ENCODE measurements at regions of chr19 and their contacts with region 1.

Region 1: DNA sequence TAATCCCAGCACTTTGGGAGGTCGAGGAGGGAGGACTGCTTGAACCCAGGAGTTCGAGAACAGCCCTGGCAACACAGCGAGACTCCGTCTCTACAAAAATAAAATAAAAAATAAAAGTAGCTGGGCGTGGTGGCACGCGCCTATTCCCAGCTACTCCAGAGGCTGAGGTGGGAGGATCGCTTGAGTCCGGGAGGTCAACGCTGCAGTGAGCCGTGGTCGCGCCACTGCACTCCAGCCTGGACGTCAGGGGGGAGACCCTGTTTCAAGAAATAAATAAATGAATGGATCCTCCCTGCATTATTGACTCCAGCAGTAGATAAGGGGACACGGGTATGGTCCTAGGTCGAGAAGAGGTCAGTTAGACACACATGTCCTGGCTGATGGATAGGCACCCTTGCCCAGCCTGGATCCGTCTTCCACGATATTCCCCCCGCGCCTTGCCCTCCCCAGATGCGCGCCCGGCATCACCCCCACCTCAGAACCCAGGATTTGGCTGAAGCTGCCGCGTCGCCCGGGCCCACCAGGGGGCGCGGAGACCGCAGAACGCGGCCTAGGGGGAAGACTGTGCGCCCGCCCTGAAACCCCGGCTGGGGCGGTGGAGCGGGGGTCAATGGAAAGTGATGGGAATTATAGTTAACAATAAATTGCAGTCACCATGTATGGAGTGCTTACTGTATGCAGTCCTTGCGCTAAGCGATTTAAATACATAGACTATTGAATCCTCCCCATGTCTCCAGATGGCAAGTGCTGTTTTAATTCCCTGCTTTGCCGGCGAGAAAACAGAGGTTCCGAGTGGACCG is 2.1 kb upstream of the HOOK2 start:
- DNase-seq: peak; percentile 78
- H3K4me3 ChIP-seq: peak overlapping the region; percentile 69
- H3K27ac ChIP-seq: peak overlapping the region; percentile 56
- H3K4me1 ChIP-seq: peaks cover 44% of the 10 kb centered on the region
- CTCF ChIP-seq: peak; percentile 96

Region 2: DNA sequence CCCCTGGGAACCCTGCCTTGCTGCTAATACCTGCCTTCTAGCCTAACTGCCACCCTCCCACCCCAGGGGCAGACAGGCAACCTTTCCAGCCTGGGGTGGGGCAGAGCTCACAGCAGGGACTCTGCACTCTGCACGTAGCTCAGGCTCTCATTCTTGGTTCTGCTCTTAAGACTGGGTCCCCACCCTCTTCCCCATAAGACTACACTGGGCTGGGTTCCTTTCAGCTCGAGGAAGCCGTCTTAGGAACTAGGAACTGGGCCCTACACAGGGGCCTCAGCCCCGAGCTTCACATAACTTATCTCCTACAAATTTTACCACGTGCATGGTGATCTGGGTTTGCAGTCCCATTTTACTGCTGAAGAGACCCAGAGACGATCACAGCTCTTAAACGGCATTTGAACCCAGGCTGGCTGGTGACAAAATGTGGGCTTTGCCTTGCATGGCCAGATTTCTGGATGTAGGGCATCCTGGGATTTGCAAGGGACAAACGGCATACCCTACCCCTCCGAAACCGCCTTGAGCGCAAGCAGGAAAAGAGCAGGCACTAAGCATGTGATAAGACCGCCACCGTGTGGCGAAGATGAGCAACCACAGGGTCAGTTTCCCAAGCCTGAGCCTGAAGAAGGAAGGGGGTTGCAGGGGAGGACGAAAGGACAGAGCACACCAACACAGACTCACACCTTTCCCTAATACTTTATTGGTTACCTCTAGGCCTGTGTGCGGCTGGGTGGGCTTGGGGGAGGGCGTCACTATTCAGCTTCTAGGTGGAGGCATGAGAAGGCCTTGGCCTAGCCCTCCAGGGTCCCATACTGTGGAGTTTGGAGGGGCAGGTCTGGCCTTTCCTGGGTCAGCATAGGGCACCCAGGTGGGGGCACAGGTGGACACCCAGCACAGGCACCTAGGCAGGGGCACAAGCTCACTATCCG is 19.0 kb after region 1 on chr19:
- CTCF ChIA-PET with region 1: interaction called, 20 read pairs
- POLR2A ChIA-PET with region 1: interaction called, 10 read pairs
- intact Hi-C with region 1: loop called (anchors 1 kb)
- DNase-seq: peak; percentile 86
- H3K4me3 ChIP-seq: no peak overlapping the region
- H3K27ac ChIP-seq: no peak overlapping the region
- H3K4me1 ChIP-seq: peaks cover 26% of the 10 kb centered on the region
- CTCF ChIP-seq: peak; percentile 93

Measured in OCI-LY7 (cell line).